Activated B cell treated with CpG ODN at 0.5 μM for 24 hours (primary cell): ENCODE measurements at regions of chr16 and their contacts with region 1.

Region 1: DNA sequence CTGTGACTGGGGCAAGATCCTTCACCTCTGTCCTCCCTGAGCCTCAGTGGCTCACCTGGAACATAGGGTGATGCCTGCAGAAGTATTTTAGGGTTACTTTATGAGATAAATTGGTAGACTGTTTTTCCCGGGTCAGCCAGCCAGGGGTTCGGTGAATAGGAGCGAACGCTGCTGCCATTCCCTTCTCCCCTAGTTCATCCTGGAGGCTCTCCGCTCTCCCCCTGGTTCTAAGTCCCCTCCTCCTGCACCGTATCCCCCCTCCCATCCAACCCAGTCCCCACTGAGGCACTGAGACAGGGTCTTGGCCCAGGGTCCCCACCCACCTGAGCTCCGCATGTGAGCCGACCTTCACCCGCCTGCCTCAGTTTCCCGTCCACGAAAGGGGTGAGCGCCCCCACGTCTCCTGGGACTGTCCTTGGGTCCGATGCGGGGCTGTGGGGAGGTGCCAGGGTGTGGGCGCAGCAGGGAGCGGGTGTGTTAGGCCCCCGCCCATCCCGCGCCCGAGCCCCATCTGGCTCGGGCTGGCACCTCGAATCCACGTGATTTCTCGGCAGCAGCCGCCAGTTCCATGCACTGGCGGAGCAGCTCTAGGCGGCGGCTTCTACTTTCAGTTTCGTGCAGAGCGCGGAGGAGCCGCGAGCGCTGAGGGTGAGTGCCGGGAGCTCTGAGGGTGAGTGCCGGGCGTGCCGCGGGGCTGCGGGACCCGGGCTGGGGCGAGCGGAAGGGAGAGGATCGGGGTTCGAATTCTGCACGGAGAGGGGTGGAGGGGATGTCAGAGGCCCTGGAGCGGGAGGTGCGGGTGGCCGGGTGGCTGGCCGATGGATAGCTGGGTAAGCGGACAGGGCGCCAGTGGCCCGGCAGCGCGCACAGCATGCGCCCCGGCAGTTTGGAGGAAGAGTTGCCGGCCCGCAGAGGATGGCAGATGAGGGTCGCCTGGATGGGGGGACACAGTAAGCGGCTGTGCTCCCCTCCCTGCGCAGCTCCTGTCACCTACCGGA is at the start of gene NLRC5:
- DNase-seq: peak; percentile 76
- ATAC-seq: peak; percentile 89
- H3K4me3 Mint-ChIP-seq: peak within 1 kb of the TSS; percentile 96
- H3K27ac Mint-ChIP-seq: peak within 1 kb of the TSS; percentile 93
- H3K4me1 Mint-ChIP-seq: peaks cover 86% of the 10 kb centered on the region
- H3K27me3 Mint-ChIP-seq: no peaks in the 10 kb centered on the region
- CTCF ChIP-seq: no peak
- total RNA-seq, gene NLRC5: 296 and 372 TPM in 2 replicates

Region 2: DNA sequence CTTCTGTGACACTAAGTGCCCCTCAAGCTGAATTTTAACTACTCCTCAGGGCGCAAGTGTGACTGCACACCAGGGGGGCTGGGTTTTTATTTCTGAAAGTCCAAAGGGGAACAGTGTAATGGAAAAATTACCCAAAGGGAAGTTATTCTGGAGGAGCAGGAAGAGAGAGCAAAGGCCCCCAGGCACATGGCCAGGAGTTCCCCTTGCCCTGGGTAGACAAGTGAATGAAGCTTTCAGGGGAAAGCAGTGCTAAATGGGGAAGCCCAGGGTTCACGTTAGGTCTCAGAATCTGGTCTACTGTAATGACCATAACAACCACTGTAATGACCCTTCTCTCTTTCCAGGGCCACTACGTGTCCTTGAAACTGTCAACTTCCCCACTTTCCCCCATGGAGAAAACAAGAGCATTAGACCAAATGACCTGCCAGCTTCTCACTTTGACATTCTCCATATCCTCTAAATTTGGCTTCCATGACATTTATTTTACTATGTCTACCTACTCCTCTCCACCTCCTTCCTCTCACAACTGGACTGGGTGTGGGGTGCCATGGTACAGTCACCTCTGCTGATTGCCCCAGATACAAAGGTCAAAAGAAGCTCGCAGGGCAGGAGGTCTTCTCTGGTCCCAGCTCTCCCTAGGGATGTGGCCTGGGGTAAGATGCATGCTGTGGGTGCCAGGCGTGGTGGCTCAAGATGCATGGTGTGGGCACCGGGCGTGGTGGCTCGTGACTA is 1544.3 kb before region 1 on chr16:
- CTCF ChIA-PET with region 1: no interaction called
- POLR2A ChIA-PET with region 1: no interaction called
- intact Hi-C with region 1: no loop called
- DNase-seq: no peak
- ATAC-seq: no peak
- H3K4me3 Mint-ChIP-seq: no peak overlapping the region
- H3K27ac Mint-ChIP-seq: no peak overlapping the region
- H3K4me1 Mint-ChIP-seq: no peaks in the 10 kb centered on the region
- H3K27me3 Mint-ChIP-seq: no peaks in the 10 kb centered on the region
- CTCF ChIP-seq: no peak

Region 3: DNA sequence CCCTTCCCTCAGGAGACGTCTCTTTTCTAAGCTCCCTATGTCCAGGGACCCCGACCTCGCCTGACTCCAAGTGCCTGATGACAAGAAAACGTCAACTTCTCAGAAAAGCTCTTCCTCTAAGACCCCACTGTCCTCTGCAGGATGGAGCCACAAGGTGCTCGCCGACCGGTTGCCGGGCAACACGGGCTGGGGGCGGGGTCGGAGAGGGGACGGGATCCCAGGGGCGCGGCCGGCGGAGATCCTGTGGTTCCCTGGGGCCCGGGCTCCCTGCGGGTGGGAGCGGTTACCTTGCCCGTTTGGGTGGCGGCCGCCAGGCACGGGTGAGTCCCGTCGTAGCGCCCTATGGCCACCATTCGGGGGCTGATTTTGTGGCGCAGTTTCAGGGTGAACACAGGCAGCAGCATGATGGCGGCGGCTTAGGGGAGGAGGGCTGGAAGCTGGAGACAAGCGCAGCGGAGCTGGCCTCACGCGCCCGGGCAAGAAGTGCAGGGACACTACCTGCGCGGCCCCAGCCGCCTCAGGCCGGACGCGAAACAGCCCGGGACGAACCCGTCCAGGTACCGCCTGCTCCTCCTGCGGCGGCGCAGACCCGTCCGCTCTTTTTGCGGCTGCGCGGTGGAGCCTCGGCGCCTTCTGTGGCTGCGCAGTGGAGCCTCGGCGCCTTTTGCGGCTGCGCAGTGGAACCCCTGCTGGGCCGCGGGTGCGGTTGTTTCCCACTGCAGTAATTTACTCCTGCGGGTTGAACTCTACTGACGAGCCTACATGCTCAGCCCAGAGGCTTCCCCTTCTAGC is 469.6 kb before region 1 on chr16 and contains the start of gene BBS2:
- CTCF ChIA-PET with region 1: no interaction called
- POLR2A ChIA-PET with region 1: no interaction called
- intact Hi-C with region 1: no loop called
- DNase-seq: peak; percentile 94
- ATAC-seq: peak; percentile 92
- H3K4me3 Mint-ChIP-seq: peak within 1 kb of the TSS; percentile 87
- H3K27ac Mint-ChIP-seq: peak within 1 kb of the TSS; percentile 87
- H3K4me1 Mint-ChIP-seq: peaks cover 20% of the 10 kb centered on the region
- H3K27me3 Mint-ChIP-seq: no peaks in the 10 kb centered on the region
- CTCF ChIP-seq: no peak
- total RNA-seq, gene BBS2: 25.5 and 32.3 TPM in 2 replicates

Region 4: GRCh38 chr16:56944954-56945839 is 44.0 kb before region 1 on chr16:
- CTCF ChIA-PET with region 1: no interaction called
- POLR2A ChIA-PET with region 1: interaction called, 11 read pairs
- intact Hi-C with region 1: loop called (anchors 5 kb)
- DNase-seq: no peak
- ATAC-seq: no peak
- H3K4me3 Mint-ChIP-seq: no peak overlapping the region
- H3K27ac Mint-ChIP-seq: peak overlapping the region; percentile 71
- H3K4me1 Mint-ChIP-seq: peaks cover 69% of the 10 kb centered on the region
- H3K27me3 Mint-ChIP-seq: no peaks in the 10 kb centered on the region
- CTCF ChIP-seq: no peak

Region 5: GRCh38 chr16:56950881-56951771 is 38.1 kb before region 1 on chr16:
- CTCF ChIA-PET with region 1: no interaction called
- POLR2A ChIA-PET with region 1: interaction called, 11 read pairs
- intact Hi-C with region 1: loop called (anchors 5 kb)
- DNase-seq: peak; percentile 68
- ATAC-seq: peak; percentile 90
- H3K4me3 Mint-ChIP-seq: peak overlapping the region; percentile 60
- H3K27ac Mint-ChIP-seq: peak overlapping the region; percentile 74
- H3K4me1 Mint-ChIP-seq: peaks cover 48% of the 10 kb centered on the region
- H3K27me3 Mint-ChIP-seq: no peaks in the 10 kb centered on the region
- CTCF ChIP-seq: no peak

Region 6: GRCh38 chr16:56970934-56971767 is 18.1 kb before region 1 on chr16:
- CTCF ChIA-PET with region 1: interaction called, 7 read pairs
- POLR2A ChIA-PET with region 1: interaction called, 233 read pairs
- intact Hi-C with region 1: loop called (anchors 1 kb)
- DNase-seq: peak; percentile 53
- ATAC-seq: peak; percentile 96
- H3K4me3 Mint-ChIP-seq: peak overlapping the region; percentile 66
- H3K27ac Mint-ChIP-seq: peak overlapping the region; percentile 97
- H3K4me1 Mint-ChIP-seq: peaks cover 66% of the 10 kb centered on the region
- H3K27me3 Mint-ChIP-seq: no peaks in the 10 kb centered on the region
- CTCF ChIP-seq: no peak

Region 7: GRCh38 chr16:57000271-57001025 is 11.2 kb after region 1 on chr16:
- CTCF ChIA-PET with region 1: interaction called, 6 read pairs
- POLR2A ChIA-PET with region 1: interaction called, 58 read pairs
- intact Hi-C with region 1: loop called (anchors 1 kb)
- DNase-seq: peak; percentile 40
- ATAC-seq: peak; percentile 72
- H3K4me3 Mint-ChIP-seq: peak overlapping the region; percentile 55
- H3K27ac Mint-ChIP-seq: peak overlapping the region; percentile 90
- H3K4me1 Mint-ChIP-seq: peaks cover 87% of the 10 kb centered on the region
- H3K27me3 Mint-ChIP-seq: no peaks in the 10 kb centered on the region
- CTCF ChIP-seq: no peak

Region 8: GRCh38 chr16:57007530-57007929 is 18.3 kb after region 1 on chr16:
- CTCF ChIA-PET with region 1: interaction called, 3 read pairs
- POLR2A ChIA-PET with region 1: interaction called, 46 read pairs
- intact Hi-C with region 1: loop called (anchors 2 kb)
- DNase-seq: no peak
- ATAC-seq: no peak
- H3K4me3 Mint-ChIP-seq: no peak overlapping the region
- H3K27ac Mint-ChIP-seq: peak overlapping the region; percentile 78
- H3K4me1 Mint-ChIP-seq: peaks cover 82% of the 10 kb centered on the region
- H3K27me3 Mint-ChIP-seq: no peaks in the 10 kb centered on the region
- CTCF ChIP-seq: no peak

Region 9: DNA sequence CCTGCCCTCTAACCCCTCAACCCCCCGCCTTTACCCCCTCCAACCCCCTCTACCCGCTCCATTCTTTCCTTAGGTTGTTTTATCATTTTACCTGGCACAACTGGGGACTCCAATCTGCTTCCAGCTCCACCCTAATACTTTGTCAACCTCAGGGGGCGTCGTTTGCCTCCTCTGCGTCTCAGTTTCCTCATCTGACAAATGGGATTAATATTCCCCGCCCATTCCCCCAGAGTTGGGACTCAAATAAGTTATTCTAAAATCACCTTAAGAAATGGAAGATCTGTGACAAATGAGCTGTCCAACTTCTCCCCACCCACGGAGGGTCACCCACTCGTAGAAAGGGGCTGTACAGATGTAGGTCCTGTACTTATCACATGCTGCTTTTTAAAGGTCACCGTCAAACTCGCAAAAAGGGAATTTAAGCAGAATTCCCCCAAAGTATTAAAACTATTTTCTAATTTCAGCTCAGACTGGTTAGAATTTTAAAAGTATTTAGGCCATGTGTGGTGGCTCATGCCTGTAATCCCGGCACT is 62.5 kb after region 1 on chr16:
- CTCF ChIA-PET with region 1: interaction called, 10 read pairs
- POLR2A ChIA-PET with region 1: interaction called, 30 read pairs
- intact Hi-C with region 1: no loop called
- DNase-seq: no peak
- ATAC-seq: peak; percentile 61
- H3K4me3 Mint-ChIP-seq: peak overlapping the region; percentile 76
- H3K27ac Mint-ChIP-seq: peak overlapping the region; percentile 88
- H3K4me1 Mint-ChIP-seq: peaks cover 47% of the 10 kb centered on the region
- H3K27me3 Mint-ChIP-seq: no peaks in the 10 kb centered on the region
- CTCF ChIP-seq: no peak